Activated CD4-positive, alpha-beta memory T cell treated with anti-CD3 and anti-CD28 coated beads, Interleukin-2, amount 10 ng/mL, durations not matched to agents 7 days and 5 days (primary cell): ENCODE measurements at regions of chr1 and their contacts with region 1.

Region 1: GRCh38 chr1:204506961-204507387 is 9.2 kb upstream of the MDM4 start:
- DNase-seq: peak; percentile 90
- H3K4me3 Mint-ChIP-seq: peak overlapping the region; percentile 84
- H3K27ac Mint-ChIP-seq: peak overlapping the region; percentile 98
- H3K4me1 Mint-ChIP-seq: peaks cover 39% of the 10 kb centered on the region
- H3K27me3 Mint-ChIP-seq: no peaks in the 10 kb centered on the region

Region 2: GRCh38 chr1:204411451-204412204 is 95.3 kb before region 1 on chr1 and contains the start of gene PPP1R15B:
- CTCF ChIA-PET with region 1: interaction called, 8 read pairs
- POLR2A ChIA-PET with region 1: interaction called, 20 read pairs
- DNase-seq: peak; percentile 98
- H3K4me3 Mint-ChIP-seq: peak within 1 kb of the TSS; percentile 98
- H3K27ac Mint-ChIP-seq: peak within 1 kb of the TSS; percentile 98
- H3K4me1 Mint-ChIP-seq: peaks cover 19% of the 10 kb centered on the region
- H3K27me3 Mint-ChIP-seq: no peaks in the 10 kb centered on the region
- total RNA-seq, gene PPP1R15B: 76.0 to 76.1 TPM

Region 3: GRCh38 chr1:204477036-204477740 is 29.8 kb before region 1 on chr1:
- CTCF ChIA-PET with region 1: interaction called, 10 read pairs
- POLR2A ChIA-PET with region 1: no interaction called
- DNase-seq: no peak
- H3K4me3 Mint-ChIP-seq: no peak overlapping the region
- H3K27ac Mint-ChIP-seq: no peak overlapping the region
- H3K4me1 Mint-ChIP-seq: peaks cover 20% of the 10 kb centered on the region
- H3K27me3 Mint-ChIP-seq: no peaks in the 10 kb centered on the region

Region 4: GRCh38 chr1:204523605-204524215 is 16.7 kb after region 1 on chr1:
- CTCF ChIA-PET with region 1: interaction called, 71 read pairs
- POLR2A ChIA-PET with region 1: interaction called, 140 read pairs
- DNase-seq: no peak
- H3K4me3 Mint-ChIP-seq: no peak overlapping the region
- H3K27ac Mint-ChIP-seq: peak overlapping the region; percentile 7
- H3K4me1 Mint-ChIP-seq: peaks cover 42% of the 10 kb centered on the region
- H3K27me3 Mint-ChIP-seq: no peaks in the 10 kb centered on the region

Region 5: DNA sequence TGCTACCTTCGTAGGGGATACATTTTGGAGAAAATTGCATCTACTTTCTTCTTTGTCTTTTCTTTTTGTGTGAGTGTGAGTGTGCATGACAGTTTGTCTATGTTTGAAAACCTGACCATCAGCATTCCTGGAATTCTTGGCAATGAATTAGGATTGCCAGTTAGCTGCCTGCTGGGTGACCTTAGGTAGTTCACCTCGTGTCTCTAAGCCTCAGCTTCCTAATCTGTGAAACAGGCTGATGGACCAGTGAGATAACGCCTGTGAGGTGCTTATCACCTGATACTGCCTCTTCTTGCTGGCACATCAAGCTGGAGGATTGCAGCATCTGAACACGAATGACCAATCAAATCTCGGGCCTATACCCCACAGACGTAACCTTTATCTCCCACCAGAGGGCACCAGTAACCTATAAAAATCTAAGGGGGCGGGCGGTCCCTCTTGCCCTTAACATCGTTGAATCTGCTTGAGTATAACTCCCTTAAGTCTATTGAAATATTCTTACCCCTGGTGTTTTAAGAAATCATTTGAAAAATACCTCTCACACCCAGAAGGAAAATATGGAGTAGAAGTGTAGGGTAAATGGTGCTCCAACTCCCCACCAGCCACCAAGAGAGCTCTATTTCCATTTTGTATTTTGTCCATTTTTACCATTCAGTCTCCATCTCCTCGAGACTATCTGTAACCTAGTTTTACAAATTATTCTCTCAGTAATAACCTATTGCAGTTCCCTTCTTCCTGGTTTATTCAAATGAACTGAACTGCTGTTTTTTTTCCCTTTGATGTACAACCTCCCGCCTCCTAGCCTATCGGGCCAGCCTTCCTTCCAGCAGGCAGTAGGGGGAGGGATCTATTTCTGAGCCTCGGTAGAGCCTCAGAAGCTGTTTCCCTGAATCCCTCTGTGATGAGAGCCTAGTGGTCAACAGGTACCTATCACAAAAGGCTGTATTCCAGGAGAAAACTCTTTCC is 58.9 kb after region 1 on chr1:
- CTCF ChIA-PET with region 1: interaction called, 10 read pairs
- POLR2A ChIA-PET with region 1: interaction called, 7 read pairs
- DNase-seq: peak; percentile 67
- H3K4me3 Mint-ChIP-seq: no peak overlapping the region
- H3K27ac Mint-ChIP-seq: peak overlapping the region; percentile 73
- H3K4me1 Mint-ChIP-seq: peaks cover 51% of the 10 kb centered on the region
- H3K27me3 Mint-ChIP-seq: no peaks in the 10 kb centered on the region

Region 6: GRCh38 chr1:205032508-205032907 is 525.5 kb after region 1 on chr1:
- CTCF ChIA-PET with region 1: no interaction called
- POLR2A ChIA-PET with region 1: no interaction called
- DNase-seq: no peak
- H3K4me3 Mint-ChIP-seq: no peak overlapping the region
- H3K27ac Mint-ChIP-seq: no peak overlapping the region
- H3K4me1 Mint-ChIP-seq: no peaks in the 10 kb centered on the region
- H3K27me3 Mint-ChIP-seq: peaks cover 2% of the 10 kb centered on the region